ENCODE measurements at regions of chr11 and their contacts with region 1.

Region 1: DNA sequence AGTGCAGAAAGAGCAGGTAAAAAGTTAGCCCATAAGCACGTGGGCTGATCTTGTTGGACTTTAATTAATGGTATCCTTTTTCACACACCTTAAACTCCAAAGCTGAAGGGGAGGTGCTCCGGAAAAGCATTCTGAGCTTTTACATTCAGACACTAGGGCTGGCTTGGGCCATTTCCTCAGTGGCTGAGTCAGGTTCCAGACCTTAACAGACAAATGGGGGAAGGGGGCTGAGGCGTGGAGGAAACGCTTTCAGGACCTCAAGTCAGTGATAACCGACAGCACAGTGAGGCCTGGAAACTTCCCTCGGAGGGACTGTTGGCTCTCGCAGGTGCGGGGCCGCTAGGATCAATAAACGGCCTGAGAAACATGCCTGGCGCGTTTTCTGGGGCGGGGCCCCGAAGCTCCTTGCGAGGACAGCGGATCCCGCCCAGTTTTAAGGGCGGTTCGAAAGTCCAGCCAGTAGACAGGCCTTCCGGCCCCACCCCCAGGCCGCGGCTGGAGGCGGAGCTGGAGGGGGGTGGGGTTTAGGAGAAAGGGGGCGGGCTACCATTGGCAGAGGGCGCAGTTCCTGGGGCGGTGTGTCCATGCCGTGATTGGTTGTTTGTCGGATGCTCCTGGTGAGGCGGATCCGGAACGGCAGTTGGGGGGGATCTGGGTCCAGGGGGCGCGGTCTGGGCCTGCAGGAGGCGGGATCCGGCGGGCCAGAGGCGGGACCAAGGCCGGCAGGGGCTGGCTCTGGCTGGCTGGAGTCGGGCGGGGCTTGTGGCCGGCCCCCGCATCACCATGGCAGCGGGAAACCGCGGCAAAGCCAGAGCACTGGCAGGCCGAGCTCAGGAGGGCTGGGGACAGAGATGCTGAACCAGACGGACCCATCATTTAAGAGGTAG is 8.0 kb downstream of the C11orf52 start:
- DNase-seq: peak; percentile 97
- ATAC-seq: peak; percentile 94
- H3K4me3 Mint-ChIP-seq: peak overlapping the region; percentile 74
- H3K27ac Mint-ChIP-seq: peak overlapping the region; percentile 96
- H3K4me1 Mint-ChIP-seq: peaks cover 28% of the 10 kb centered on the region
- H3K27me3 Mint-ChIP-seq: no peaks in the 10 kb centered on the region
- CTCF ChIP-seq: no peak

Region 2: GRCh38 chr11:111748035-111748804 is 178.5 kb before region 1 on chr11:
- CTCF ChIA-PET with region 1: no interaction called
- POLR2A ChIA-PET with region 1: no interaction called
- DNase-seq: no peak
- ATAC-seq: peak; percentile 72
- H3K4me3 Mint-ChIP-seq: no peak overlapping the region
- H3K27ac Mint-ChIP-seq: no peak overlapping the region
- H3K4me1 Mint-ChIP-seq: no peaks in the 10 kb centered on the region
- H3K27me3 Mint-ChIP-seq: no peaks in the 10 kb centered on the region
- CTCF ChIP-seq: no peak

Region 3: GRCh38 chr11:111938687-111939160 is 12.0 kb after region 1 on chr11:
- CTCF ChIA-PET with region 1: interaction called, 16 read pairs
- POLR2A ChIA-PET with region 1: interaction called, 17 read pairs
- DNase-seq: peak; percentile 40
- ATAC-seq: peak; percentile 36
- H3K4me3 Mint-ChIP-seq: peak overlapping the region; percentile 68
- H3K27ac Mint-ChIP-seq: peak overlapping the region; percentile 76
- H3K4me1 Mint-ChIP-seq: peaks cover 46% of the 10 kb centered on the region
- H3K27me3 Mint-ChIP-seq: no peaks in the 10 kb centered on the region; the same call in 1 of the 2 replicates
- CTCF ChIP-seq: no peak

Region 4: DNA sequence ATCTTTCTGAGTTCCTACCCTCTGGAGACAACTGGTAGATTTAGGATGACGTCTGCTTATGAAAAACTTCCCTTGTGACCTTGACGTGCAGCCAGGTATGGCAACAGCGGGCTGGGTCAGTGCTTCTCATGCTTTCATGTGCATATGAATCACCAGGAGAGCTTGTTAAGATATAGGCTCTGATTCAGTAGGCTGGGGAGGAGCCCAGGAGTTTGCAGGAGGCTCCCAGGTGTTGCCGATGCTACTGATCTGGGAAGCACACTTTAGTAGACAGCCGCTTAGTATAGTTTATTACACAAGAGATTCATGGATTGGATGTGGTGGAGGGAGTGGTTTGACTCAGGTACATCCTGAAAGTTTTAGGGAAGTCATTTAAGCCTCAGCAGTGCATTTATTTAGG is 34.2 kb after region 1 on chr11:
- CTCF ChIA-PET with region 1: interaction called, 10 read pairs
- POLR2A ChIA-PET with region 1: interaction called, 3 read pairs
- DNase-seq: peak; percentile 57
- ATAC-seq: peak; percentile 98
- H3K4me3 Mint-ChIP-seq: peak overlapping the region; percentile 39
- H3K27ac Mint-ChIP-seq: peak overlapping the region; percentile 86
- H3K4me1 Mint-ChIP-seq: peaks cover 32% of the 10 kb centered on the region
- H3K27me3 Mint-ChIP-seq: no peaks in the 10 kb centered on the region
- CTCF ChIP-seq: no peak

Region 5: GRCh38 chr11:112404112-112404511 is 477.4 kb after region 1 on chr11:
- CTCF ChIA-PET with region 1: no interaction called
- POLR2A ChIA-PET with region 1: no interaction called
- DNase-seq: no peak
- ATAC-seq: peak; percentile 17; the same call in 1 of the 2 replicates
- H3K4me3 Mint-ChIP-seq: no peak overlapping the region
- H3K27ac Mint-ChIP-seq: no peak overlapping the region
- H3K4me1 Mint-ChIP-seq: peaks cover 15% of the 10 kb centered on the region
- H3K27me3 Mint-ChIP-seq: peaks cover 4% of the 10 kb centered on the region; the same call in 1 of the 2 replicates
- CTCF ChIP-seq: no peak